CD4-positive, alpha-beta memory T cell (primary cell): ENCODE measurements at regions of chr6 and their contacts with region 1.

Region 1: DNA sequence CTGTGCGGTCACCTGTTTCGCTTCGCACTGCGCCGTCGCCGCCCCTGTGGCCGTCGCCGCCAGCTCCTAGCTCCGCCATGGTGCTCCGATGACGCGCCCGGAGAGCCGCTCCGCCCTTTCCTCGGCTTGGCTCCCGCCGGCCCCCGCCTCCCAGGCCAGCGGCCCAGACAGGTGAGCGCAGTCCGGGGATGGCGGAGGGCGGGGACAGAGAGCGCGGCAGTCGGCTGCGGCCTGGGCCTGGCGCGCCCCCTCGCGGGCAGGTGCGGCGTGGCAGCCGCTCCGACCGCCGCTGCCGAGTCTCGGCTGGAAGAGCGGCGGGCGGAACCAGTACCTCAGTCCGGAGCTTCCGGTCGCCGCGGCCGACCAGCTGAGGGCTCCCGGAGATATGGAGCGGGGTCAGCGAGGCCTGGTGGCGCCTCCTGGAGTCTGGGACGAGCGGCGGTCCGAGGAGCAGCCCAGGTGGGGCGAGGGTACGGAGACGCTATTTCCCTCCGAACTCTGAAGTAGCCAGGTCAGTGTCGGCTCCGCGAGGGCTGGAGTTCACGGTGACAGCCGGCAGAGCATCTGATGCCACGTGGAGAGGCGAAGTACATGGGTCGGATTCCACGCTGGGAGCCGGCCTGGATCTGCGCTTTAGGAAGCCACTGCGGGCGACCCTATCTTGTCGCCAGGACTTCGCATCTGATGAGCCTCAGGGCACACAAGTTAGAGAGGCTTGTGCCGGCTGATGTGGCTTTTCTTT is at the start of gene MAP7:
- DNase-seq: peak; percentile 56 to 75 (median 68)
- H3K4me3 ChIP-seq: peak within 1 kb of the TSS in 1 of 2 donors; percentile 54
- H3K4me3 Mint-ChIP-seq: peak within 1 kb of the TSS; percentile 65 to 81 (median 76)
- H3K27ac ChIP-seq: no peak within 1 kb of the TSS
- H3K27ac Mint-ChIP-seq: peak within 1 kb of the TSS in 6 of 7 donors; percentile 36 to 73 (median 52)
- H3K4me1 ChIP-seq: peaks cover 13% of the 10 kb centered on the region
- H3K4me1 Mint-ChIP-seq: peaks cover 1 to 14% (median 9%) of the 10 kb centered on the region in 4 donors
- H3K27me3 ChIP-seq: peaks cover 14% of the 10 kb centered on the region
- H3K27me3 Mint-ChIP-seq: peaks cover 16 to 21% of the 10 kb centered on the region in 2 donors
- total RNA-seq, gene MAP7: 0.55 to 0.69 TPM

Region 2: GRCh38 chr6:135451693-135452092 is 1098.8 kb before region 1 on chr6:
- CTCF ChIA-PET with region 1: no interaction called
- POLR2A ChIA-PET with region 1: no interaction called
- intact Hi-C with region 1: loop called (anchors 2 kb)
- DNase-seq: peak in 4 of 5 donors; percentile 33 to 51 (median 42)
- H3K4me3 ChIP-seq: no peak overlapping the region
- H3K4me3 Mint-ChIP-seq: no peak overlapping the region
- H3K27ac ChIP-seq: no peak overlapping the region
- H3K27ac Mint-ChIP-seq: no peak overlapping the region
- H3K4me1 ChIP-seq: no peaks in the 10 kb centered on the region
- H3K4me1 Mint-ChIP-seq: no peaks in the 10 kb centered on the region
- H3K27me3 ChIP-seq: no peaks in the 10 kb centered on the region
- H3K27me3 Mint-ChIP-seq: no peaks in the 10 kb centered on the region

Region 3: GRCh38 chr6:135497412-135498269 is 1052.9 kb before region 1 on chr6 and contains the start of gene AHI1:
- CTCF ChIA-PET with region 1: no interaction called
- POLR2A ChIA-PET with region 1: no interaction called
- intact Hi-C with region 1: loop called (anchors 10 kb)
- DNase-seq: peak; percentile 86 to 92 (median 89)
- H3K4me3 ChIP-seq: peak within 1 kb of the TSS; percentile 32 to 97
- H3K4me3 Mint-ChIP-seq: peak within 1 kb of the TSS in 3 of 8 donors; percentile 29 to 95 (median 59)
- H3K27ac ChIP-seq: peak within 1 kb of the TSS; percentile 87
- H3K27ac Mint-ChIP-seq: peak within 1 kb of the TSS in 3 of 7 donors; percentile 21 to 69 (median 28)
- H3K4me1 ChIP-seq: peaks cover 15% of the 10 kb centered on the region
- H3K4me1 Mint-ChIP-seq: peaks cover 5 to 9% (median 6%) of the 10 kb centered on the region in 4 donors
- H3K27me3 ChIP-seq: no peaks in the 10 kb centered on the region
- H3K27me3 Mint-ChIP-seq: no peaks in the 10 kb centered on the region
- total RNA-seq, gene AHI1: 12.2 to 12.8 TPM

Region 4: DNA sequence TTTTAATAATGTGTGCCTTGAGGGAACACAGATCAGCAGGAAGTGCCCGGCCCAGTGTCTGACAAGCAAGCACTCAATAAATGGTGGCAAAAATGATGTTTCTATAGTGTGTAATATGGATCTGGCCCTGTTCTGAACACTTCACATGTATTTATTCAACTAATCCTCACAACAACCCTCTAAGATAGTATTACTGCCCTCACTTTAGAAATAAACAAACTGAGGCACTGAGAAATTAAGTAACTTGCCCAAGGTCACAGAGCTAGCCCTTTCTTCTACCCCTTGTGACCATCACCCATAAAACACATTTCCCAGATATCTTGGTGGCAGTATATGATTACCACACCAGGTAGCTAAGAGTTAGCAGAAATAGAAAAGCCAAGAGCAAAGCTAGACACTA is 287.6 kb before region 1 on chr6:
- CTCF ChIA-PET with region 1: no interaction called
- POLR2A ChIA-PET with region 1: no interaction called
- intact Hi-C with region 1: no loop called
- DNase-seq: no peak
- H3K4me3 ChIP-seq: no peak overlapping the region
- H3K4me3 Mint-ChIP-seq: no peak overlapping the region
- H3K27ac ChIP-seq: no peak overlapping the region
- H3K27ac Mint-ChIP-seq: peak overlapping the region in 2 of 7 donors; percentile 14 to 62
- H3K4me1 ChIP-seq: peaks cover 8% of the 10 kb centered on the region
- H3K4me1 Mint-ChIP-seq: peaks cover 19 to 37% (median 28%) of the 10 kb centered on the region in 4 donors
- H3K27me3 ChIP-seq: no peaks in the 10 kb centered on the region
- H3K27me3 Mint-ChIP-seq: no peaks in the 10 kb centered on the region

Region 5: GRCh38 chr6:136362421-136363356 is 187.8 kb before region 1 on chr6:
- CTCF ChIA-PET with region 1: no interaction called
- POLR2A ChIA-PET with region 1: no interaction called
- intact Hi-C with region 1: no loop called
- DNase-seq: no peak
- H3K4me3 ChIP-seq: no peak overlapping the region
- H3K4me3 Mint-ChIP-seq: no peak overlapping the region
- H3K27ac ChIP-seq: no peak overlapping the region
- H3K27ac Mint-ChIP-seq: no peak overlapping the region
- H3K4me1 ChIP-seq: peaks cover 5% of the 10 kb centered on the region
- H3K4me1 Mint-ChIP-seq: peaks cover 6 to 9% (median 9%) of the 10 kb centered on the region in 4 donors
- H3K27me3 ChIP-seq: no peaks in the 10 kb centered on the region
- H3K27me3 Mint-ChIP-seq: no peaks in the 10 kb centered on the region

Region 6: DNA sequence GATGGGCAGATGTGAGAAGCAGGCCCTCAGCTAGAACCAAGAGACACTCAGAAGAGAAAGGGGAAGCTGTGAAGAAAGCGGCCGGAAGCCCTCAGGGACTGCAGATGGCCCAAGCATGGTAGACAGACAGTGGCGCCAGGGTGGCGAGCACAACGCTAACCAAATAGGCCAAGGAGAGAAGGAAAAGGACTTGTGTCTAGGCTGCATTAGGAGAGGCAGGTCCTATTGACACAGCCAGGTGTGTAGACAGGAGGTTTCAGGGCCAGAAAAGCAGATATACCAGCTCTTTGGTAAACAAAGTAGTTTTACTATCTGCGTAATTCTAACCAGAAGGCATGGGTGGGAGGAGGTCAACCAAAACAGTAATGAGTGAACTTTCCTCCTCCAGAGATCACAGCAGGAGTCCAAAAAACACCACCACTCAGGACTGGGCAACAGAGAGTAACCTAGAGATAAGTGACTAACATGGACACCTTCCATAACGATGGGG is 15.6 kb after region 1 on chr6:
- CTCF ChIA-PET with region 1: interaction called, 56 read pairs
- POLR2A ChIA-PET with region 1: no interaction called
- intact Hi-C with region 1: no loop called
- DNase-seq: no peak
- H3K4me3 ChIP-seq: no peak overlapping the region
- H3K4me3 Mint-ChIP-seq: no peak overlapping the region
- H3K27ac ChIP-seq: no peak overlapping the region
- H3K27ac Mint-ChIP-seq: peak overlapping the region in 3 of 7 donors; percentile 24 to 47 (median 43)
- H3K4me1 ChIP-seq: peaks cover 45% of the 10 kb centered on the region
- H3K4me1 Mint-ChIP-seq: peaks cover 4 to 34% (median 26%) of the 10 kb centered on the region in 4 donors
- H3K27me3 ChIP-seq: no peaks in the 10 kb centered on the region
- H3K27me3 Mint-ChIP-seq: no peaks in the 10 kb centered on the region

Region 7: DNA sequence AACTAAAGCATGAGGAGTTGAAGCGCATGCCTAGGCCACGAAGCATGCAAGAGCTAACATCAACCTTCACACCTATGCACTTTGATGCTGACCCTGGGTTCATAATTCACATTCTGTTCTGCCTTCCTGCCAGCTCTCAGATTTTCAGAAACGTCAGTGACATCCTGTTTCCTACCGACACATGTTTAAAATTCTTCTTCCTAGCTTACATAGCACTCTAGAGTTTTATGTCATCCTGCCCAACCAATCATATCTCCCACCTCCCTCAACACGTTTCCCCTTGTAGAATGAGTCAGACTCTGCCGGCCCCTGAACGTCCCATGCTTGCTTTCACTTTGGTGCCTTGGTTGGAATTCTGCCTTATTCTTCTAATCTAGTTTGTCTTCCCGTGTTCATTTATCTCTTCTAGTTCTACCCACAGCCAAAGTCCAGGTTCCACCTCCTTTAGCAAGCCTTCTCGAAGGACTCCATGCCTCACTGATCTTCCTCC is 96.9 kb after region 1 on chr6:
- CTCF ChIA-PET with region 1: no interaction called
- POLR2A ChIA-PET with region 1: no interaction called
- intact Hi-C with region 1: no loop called
- DNase-seq: peak; percentile 52 to 81 (median 71)
- H3K4me3 ChIP-seq: no peak overlapping the region
- H3K4me3 Mint-ChIP-seq: no peak overlapping the region
- H3K27ac ChIP-seq: peak overlapping the region; percentile 65
- H3K27ac Mint-ChIP-seq: no peak overlapping the region
- H3K4me1 ChIP-seq: peaks cover 19% of the 10 kb centered on the region
- H3K4me1 Mint-ChIP-seq: peaks cover 0 to 5% (median 3%) of the 10 kb centered on the region in 4 donors
- H3K27me3 ChIP-seq: no peaks in the 10 kb centered on the region
- H3K27me3 Mint-ChIP-seq: no peaks in the 10 kb centered on the region